Stomach (tissue), 19 donors: ENCODE measurements at regions of chr6 and their contacts with region 1.

Region 1: DNA sequence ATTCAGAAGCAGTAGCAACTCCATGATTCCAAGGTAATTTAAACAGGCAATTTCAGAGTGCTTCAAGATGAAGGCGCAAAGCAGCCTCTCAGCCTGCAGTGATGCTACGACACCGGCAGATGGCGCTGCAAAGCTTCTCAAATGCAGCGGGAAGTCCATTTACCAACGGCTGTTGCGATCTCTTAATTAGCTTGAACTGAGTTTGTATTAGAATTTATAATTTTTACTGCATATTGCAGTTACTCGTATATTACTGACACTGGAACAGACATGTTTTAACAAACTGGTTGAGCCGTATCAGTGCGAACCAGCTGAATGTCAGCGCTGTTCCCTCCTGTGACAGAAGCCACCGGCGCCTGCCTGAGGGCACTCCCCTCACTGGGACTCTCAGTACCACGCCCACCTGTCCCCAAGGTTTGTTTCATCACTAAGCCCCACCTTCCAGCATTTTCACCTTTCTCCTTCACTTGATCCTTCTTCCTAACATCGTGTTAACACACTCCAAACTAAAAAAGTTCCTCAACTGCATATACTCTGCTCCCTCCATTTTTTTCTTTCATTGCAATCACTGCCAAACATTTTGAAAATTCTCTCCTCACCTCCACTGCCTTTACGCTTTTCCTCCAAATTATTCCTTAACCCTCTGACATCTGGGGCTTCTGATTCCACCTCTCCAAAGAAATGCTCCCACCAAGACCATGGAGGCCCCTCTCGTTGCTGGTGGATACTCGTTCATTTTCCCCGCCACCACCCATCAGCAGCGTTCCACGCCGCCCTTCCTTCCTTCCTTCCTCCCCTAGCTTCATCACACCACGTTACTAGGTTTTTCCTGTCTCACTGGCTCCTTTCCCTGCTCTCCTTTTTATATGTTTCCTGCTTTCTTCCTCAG is 14.5 kb downstream of the GNL1 start:
- DNase-seq: peak; percentile 83 to 95
- H3K4me3 ChIP-seq: peak overlapping the region; percentile 25 to 39 (median 37)
- H3K27ac ChIP-seq: peak overlapping the region; percentile 30 to 67 (median 42)
- H3K4me1 ChIP-seq: peaks cover 8 to 25% (median 9%) of the 10 kb centered on the region in 4 donors
- H3K27me3 ChIP-seq: no peaks in the 10 kb centered on the region
- CTCF ChIP-seq: peak in 5 of 7 experiments; percentile 91 to 98 (median 98)
- EP300 ChIP-seq: no peak
- POLR2A ChIP-seq: no peak

Region 2: DNA sequence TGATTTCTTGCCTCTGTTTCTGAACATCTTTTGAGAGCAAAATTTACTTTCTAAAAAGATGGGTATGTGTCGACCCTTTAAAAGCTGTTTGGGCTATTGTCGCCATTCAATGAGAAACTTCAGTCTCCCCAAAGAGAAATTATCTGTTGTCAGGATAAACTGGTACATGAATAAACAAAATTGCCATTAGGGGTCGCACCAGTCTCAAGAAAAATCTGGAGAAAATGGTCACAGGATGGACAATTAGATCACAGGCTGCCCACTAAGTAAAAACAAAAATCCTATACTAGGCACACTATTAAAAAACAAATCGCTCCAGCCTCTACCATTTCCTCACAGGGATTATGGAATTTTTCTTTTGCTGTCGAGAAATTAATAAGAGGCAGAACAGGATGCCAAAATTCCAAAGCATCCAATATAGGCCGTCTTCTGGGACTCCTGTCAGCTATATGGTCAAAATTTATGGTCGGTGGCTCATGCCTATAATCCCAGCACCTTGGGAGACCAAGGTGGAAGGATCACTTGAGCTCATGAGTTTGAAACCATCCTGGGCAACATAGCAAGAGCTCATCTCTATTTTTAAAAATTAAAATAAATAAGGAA is 58.0 kb before region 1 on chr6:
- intact Hi-C with region 1: loop called (anchors 5 kb)
- DNase-seq: peak in 1 of 2 donors; percentile 81
- H3K4me3 ChIP-seq: no peak overlapping the region
- H3K27ac ChIP-seq: no peak overlapping the region
- H3K4me1 ChIP-seq: peaks cover 4 to 23% (median 18%) of the 10 kb centered on the region in 4 donors
- H3K27me3 ChIP-seq: peaks cover 9 to 48% (median 28%) of the 10 kb centered on the region in 3 donors
- CTCF ChIP-seq: peak in 3 of 7 experiments; percentile 41 to 66 (median 59)
- EP300 ChIP-seq: no peak
- POLR2A ChIP-seq: no peak

Region 3: DNA sequence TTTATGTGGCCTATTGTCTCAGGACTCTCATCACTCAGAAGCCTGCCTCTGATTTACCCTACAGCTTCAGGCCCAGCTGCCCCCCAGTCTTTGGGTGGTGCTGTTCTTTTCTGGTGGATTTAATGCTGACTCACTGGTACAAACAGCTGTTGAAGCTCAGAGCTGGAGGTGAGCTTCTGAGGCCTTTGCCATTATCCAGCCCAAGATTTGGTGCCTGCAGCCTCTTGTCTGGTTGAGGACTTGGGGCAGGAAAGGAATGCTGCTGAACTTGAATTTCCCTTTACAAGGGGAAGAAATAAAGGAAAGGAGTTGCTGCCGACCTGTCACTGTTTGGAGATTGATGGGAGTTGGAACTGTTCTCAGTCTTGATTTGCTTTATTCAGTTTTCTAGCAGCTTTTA is 49.2 kb after region 1 on chr6:
- intact Hi-C with region 1: loop called (anchors 10 kb)
- DNase-seq: peak in 1 of 2 donors; percentile 79
- H3K4me3 ChIP-seq: no peak overlapping the region
- H3K27ac ChIP-seq: peak overlapping the region in 4 of 5 donors; percentile 24 to 37 (median 28)
- H3K4me1 ChIP-seq: peaks cover 4 to 13% (median 11%) of the 10 kb centered on the region in 4 donors
- H3K27me3 ChIP-seq: no peaks in the 10 kb centered on the region
- CTCF ChIP-seq: no peak
- EP300 ChIP-seq: no peak
- POLR2A ChIP-seq: no peak